Posterior vena cava (tissue), 2 donors: ENCODE measurements at regions of chr7 and their contacts with region 1.

Region 1: DNA sequence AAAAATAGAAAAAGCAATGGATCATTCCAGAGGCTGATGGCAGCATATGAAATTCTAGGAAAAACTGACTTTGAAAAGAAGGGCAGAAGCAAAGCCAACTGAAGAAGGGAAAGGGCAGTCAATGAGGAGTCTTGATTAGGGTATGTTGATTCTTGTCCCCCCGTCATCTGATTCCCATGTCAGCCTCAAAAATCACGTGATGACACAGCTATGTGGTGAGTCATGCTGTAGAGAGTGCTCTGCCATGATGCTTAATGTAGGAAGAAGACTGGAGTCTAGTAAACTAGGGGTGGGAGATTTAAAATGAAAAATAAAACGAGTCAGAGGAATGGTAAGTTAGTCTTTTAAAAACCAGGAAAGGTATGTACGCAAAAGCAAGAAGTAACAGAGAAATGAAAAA is 3.9 kb upstream of the POU6F2 start:
- DNase-seq: no peak

Region 2: GRCh38 chr7:39838326-39838725 is 864.6 kb after region 1 on chr7:
- intact Hi-C with region 1: loop called in 1 of 2 experiments (anchors 5 kb)
- DNase-seq: no peak